ENCODE measurements at regions of chr10 and their contacts with region 1.

Region 1: DNA sequence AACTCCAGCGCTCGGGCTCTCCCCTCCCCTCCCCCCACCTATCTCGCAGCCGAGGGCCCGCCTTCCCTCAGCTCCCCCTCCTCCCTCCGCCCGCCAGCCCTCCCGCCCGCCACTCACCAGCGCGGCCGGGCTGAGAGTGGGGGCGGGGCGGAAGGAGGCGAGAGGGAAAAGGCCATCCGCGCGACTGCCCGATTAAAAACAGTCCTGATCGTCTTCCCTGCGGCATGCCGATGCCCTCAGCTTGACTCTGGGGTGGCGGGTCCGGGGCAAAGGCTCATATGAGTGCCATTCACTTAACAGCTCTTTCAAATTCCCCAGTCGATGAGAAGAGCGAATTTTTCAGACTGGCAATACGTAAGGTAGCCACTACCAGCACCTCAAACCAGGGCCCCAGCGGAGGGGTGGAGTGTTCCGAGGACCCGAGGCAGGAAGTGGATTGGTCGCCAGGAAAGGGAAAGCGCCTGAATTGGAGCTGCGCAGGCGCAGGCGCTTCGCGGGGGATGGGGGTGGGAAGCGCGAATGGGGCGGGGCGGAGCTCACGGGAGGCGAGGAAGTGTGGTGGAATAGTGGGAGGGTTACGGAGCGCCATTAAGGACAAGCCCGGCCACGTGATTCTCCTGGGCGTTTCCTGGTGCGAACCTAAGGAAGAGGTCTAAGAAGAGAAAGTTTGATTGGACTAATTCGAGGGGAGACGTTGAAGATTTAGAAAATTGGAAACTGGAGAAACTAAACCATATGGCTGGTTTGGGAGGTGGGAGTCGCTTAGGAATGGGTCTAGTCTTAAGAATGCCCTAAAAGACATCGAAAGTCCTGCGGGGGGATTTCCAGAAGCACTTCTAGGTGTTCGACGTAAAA is at the start of gene UPF2:
- DNase-seq: peak; percentile 94 to 97 (median 96)
- H3K4me3 ChIP-seq: peak within 1 kb of the TSS; percentile 51 to 100 (median 99)
- H3K27ac ChIP-seq: peak within 1 kb of the TSS; percentile 94 to 100 (median 99)
- H3K27me3 ChIP-seq: no peaks in the 10 kb centered on the region
- CTCF ChIP-seq: peak in 10 of 56 donors; percentile 10 to 36 (median 14)
- total RNA-seq, gene UPF2: 20.5 to 40.7 (median 28.6) TPM

Region 2: GRCh38 chr10:11986593-11987216 is 56.3 kb before region 1 on chr10:
- intact Hi-C with region 1: loop called in 1 of 2 experiments (anchors 5 kb)
- DNase-seq: peak; percentile 58 to 88 (median 74)
- H3K4me3 ChIP-seq: peak overlapping the region in 1 of 59 donors; percentile 4
- H3K27ac ChIP-seq: no peak overlapping the region
- H3K27me3 ChIP-seq: no peaks in the 10 kb centered on the region
- CTCF ChIP-seq: peak; percentile 70 to 97 (median 90)

Region 3: GRCh38 chr10:12068449-12069269 is 25.6 kb after region 1 on chr10 and contains the start of gene DHTKD1:
- intact Hi-C with region 1: loop called (anchors 1 kb)
- DNase-seq: peak; percentile 97 to 100 (median 98)
- H3K4me3 ChIP-seq: peak within 1 kb of the TSS; percentile 56 to 100 (median 96)
- H3K27ac ChIP-seq: peak within 1 kb of the TSS in 58 of 59 donors; percentile 27 to 96 (median 88)
- H3K27me3 ChIP-seq: no peaks in the 10 kb centered on the region
- CTCF ChIP-seq: peak in 48 of 56 donors; percentile 8 to 60 (median 42)
- total RNA-seq, gene DHTKD1: 19.5 to 48.8 (median 27.8) TPM

Region 4: DNA sequence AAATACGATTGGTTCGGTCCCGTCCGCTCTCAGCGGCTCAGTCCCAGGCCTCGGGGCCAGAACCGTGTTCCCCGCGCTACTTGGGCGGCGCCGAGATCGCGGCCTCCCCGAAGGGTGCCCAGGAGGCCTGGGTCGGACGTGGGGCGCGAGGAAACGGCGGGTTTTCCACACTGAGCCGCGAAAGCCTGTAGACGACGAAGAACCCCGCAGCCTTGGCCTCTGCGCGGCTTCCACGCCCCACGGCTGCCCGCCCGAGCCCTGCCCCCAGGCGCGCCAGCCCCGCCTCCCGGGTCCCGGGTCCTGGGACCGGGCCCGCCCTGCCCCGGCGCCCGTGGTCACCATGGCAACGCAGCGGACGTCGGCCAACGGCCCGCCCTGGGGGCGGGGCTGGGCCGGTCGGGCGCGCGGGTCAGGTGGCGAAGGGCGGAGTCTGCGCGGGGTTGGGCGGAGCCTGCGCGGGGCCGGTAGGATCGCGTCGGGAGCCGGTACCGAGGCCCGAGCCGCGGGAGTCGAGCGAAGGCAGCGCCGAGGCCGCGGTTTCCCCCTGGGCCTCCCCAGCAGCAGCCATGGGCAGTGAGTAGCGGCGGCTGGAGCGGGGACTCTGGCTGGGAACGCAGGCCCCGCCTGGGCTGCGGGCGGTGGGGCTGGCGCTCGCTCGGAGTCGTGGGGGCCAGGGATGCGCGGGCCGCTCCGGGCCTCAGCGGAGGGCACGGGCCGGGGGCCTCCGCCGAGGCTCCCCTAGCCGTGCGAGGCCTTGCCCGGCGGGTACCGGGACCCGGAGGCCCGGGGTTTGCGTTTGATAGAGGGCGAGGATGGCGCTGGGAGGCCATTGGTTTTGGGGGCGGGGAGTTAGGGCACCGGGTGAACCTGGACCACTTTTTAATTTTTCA is 86.4 kb after region 1 on chr10 and contains the start of gene SEC61A2:
- intact Hi-C with region 1: loop called in 1 of 2 experiments (anchors 5 kb)
- DNase-seq: peak; percentile 84 to 99 (median 94)
- H3K4me3 ChIP-seq: peak within 1 kb of the TSS; percentile 59 to 100 (median 95)
- H3K27ac ChIP-seq: peak within 1 kb of the TSS in 57 of 59 donors; percentile 29 to 94 (median 85)
- H3K27me3 ChIP-seq: no peaks in the 10 kb centered on the region
- CTCF ChIP-seq: peak in 9 of 56 donors; percentile 1 to 22 (median 14)
- total RNA-seq, gene SEC61A2: 24.7 to 79.3 (median 53.4) TPM

Region 5: GRCh38 chr10:12195603-12196506 is 152.8 kb after region 1 on chr10 and contains the starts of genes CDC123 and NUDT5:
- intact Hi-C with region 1: loop called (anchors 5 to 10 kb)
- DNase-seq: peak; percentile 82 to 91 (median 87)
- H3K4me3 ChIP-seq: peak within 1 kb of the TSS; percentile 50 to 100 (median 91)
- H3K27ac ChIP-seq: peak within 1 kb of the TSS; percentile 63 to 100 (median 96)
- H3K27me3 ChIP-seq: no peaks in the 10 kb centered on the region
- CTCF ChIP-seq: peak in 33 of 56 donors; percentile 2 to 55 (median 27)
- total RNA-seq, gene CDC123: 32.1 to 76.3 (median 54.4) TPM
- total RNA-seq, gene NUDT5: 19.1 to 48.8 (median 33.7) TPM

Region 6: DNA sequence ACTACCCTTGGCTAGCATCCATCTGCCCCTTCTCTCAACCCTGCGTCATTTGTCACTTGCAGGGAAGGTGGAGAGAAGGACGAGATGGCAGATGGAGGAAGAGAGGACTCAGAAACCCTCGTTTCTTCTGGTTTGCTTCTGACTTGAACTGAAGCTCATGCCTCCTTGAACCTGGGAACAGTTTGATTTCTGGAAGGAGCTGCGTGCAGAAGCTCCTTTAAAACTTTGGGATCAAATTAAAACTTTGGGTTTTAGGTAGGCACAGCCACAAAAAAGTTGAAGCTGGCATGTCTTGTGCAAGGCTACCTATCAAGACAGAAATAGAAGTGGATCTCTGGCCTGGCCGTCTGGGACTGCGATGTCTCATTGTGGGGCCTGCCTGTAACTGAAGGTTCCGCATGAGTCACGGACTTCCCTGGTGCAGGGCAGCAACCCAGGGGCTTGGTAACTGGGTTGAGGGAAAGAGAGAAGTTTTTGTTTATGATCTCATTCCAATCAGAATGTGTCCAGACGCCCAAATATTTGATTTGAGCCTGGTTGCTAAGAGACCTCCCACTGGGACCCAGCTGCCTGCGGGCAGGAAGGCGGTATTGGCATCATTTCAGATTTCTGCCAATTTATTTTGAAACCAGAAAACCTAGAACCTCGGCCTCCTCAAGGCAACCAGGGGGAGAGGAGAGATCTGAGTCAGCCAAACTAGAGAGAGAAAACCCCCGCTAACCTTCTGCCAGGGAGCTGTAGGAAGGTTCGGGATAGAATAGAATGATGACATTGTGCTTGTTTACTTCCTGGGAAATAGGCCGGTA is 290.6 kb after region 1 on chr10:
- intact Hi-C with region 1: no loop called
- DNase-seq: peak in 3 of 10 donors; percentile 41 to 57 (median 56)
- H3K4me3 ChIP-seq: peak overlapping the region in 4 of 59 donors; percentile 0 to 24 (median 12)
- H3K27ac ChIP-seq: peak overlapping the region in 20 of 59 donors; percentile 3 to 69 (median 29)
- H3K27me3 ChIP-seq: no peaks in the 10 kb centered on the region
- CTCF ChIP-seq: no peak

Region 7: GRCh38 chr10:12594448-12594944 is 551.5 kb after region 1 on chr10:
- intact Hi-C with region 1: no loop called
- DNase-seq: no peak
- H3K4me3 ChIP-seq: no peak overlapping the region
- H3K27ac ChIP-seq: peak overlapping the region in 2 of 59 donors; percentile 5 to 21
- H3K27me3 ChIP-seq: no peaks in the 10 kb centered on the region
- CTCF ChIP-seq: no peak